Activated T-helper 1 cell treated with anti-CD3 and anti-CD28 coated beads, Interleukin-12 subunit alpha, Interleukin-12 subunit beta, Interleukin-2, Interleukin-4 antibody, amounts not matched to agents 30 ng/mL and 10 ng/mL and 1 ng/mL, durations not matched to agents 14 hours and 24 hours and 36 hours (primary cell): ENCODE measurements at regions of chr5 and their contacts with region 1.

Region 1: DNA sequence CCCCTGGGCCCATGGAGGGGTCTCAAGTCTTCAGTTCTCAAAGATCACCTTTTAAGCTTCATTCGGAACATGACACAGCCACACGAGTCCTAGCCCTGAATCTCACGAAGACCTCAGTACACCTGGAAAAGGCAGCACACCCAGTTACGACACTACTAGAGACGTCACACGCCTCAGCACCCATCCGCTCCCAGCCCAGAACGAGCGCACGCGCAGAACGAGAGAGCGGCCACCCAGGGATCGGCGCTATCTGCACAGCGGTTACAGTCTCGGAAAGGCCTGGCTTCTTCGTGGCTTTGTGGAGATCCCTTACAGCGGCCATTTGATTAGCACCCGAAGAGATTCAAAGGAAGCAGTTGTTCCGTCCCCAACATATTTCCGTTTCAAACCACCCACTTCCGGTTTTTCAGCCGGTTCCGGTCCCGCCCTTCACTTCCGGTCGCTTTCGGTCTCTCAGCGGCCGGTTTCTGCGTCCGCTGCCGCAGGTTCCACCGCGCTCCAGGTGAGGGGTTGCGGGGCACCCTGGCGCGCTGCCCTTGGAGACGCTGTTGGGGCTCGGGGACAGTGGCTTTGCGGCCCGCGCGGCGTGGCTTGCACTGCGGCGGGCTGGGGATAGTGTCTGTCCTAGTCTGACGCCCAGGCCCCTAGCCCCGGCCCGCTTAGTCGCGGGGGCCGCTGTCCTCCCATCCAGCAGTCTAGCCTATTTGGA is at the start of gene UBLCP1:
- DNase-seq: peak; percentile 71
- H3K4me3 Mint-ChIP-seq: peak within 1 kb of the TSS; percentile 96
- H3K27ac Mint-ChIP-seq: peak within 1 kb of the TSS; percentile 98
- H3K4me1 Mint-ChIP-seq: peaks cover 21% of the 10 kb centered on the region
- H3K27me3 Mint-ChIP-seq: peaks cover 2% of the 10 kb centered on the region
- total RNA-seq, gene UBLCP1: 30.8 and 32.3 TPM in 2 replicates

Region 2: DNA sequence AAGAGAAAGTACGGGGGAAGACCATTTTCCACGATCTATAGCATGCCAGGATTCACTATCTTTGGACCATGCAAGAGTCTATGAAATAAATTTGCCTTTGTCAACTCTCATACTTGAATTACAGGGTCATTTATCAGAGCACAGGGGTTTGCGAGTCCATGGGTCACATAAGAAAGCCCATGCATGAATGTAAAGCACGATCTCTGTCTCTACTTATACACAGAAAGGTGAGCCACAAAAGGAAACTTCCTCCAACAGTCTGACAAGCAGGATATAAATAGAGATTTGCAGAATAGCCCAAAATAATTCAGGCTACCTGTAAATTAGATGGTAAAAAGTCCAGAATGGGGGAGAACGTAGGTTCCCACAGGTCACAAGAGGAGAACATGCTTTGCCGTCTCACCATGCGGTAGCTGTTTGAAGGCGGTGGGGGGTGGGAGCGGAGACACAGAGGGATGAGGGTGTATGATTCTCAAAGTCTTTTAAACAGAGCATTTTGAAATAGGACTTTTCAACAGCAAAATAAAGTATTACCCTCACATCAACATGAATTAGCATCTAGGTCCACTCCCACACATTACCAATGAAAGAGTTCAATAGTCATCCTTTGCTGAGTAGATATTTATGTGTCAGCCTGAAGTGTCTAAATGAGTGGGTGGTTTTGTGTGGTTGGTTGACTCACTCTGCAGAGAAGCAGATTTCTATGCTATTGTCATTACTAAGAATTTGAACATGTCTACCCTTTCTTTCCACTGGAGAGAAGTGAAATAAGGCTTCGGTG is 443.0 kb before region 1 on chr5:
- intact Hi-C with region 1: loop called (anchors 2 kb)
- DNase-seq: no peak
- H3K4me3 Mint-ChIP-seq: no peak overlapping the region
- H3K27ac Mint-ChIP-seq: peak overlapping the region; percentile 80
- H3K4me1 Mint-ChIP-seq: peaks cover 55% of the 10 kb centered on the region
- H3K27me3 Mint-ChIP-seq: no peaks in the 10 kb centered on the region

Region 3: DNA sequence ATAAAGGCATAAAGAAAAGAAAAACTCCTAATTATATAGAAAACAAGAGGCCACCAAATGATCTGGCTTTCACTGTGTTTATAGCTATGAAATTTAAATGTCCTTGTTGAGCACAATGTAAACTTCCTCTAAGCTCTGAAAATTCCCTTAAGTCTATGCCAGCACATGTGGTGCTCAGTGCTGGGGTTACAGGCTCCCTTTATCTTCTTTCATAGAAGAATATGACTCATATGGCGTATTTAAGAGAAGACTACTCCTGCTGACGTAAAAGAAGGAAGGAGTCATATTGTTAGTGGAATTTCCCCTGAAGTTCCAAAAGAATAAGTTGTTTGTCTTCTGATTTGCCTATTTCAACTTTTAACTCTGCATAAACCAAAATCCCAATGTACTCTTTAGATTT is 84.0 kb before region 1 on chr5:
- intact Hi-C with region 1: loop called (anchors 1 kb)
- DNase-seq: no peak
- H3K4me3 Mint-ChIP-seq: peak overlapping the region; percentile 66
- H3K27ac Mint-ChIP-seq: peak overlapping the region; percentile 91
- H3K4me1 Mint-ChIP-seq: peaks cover 93% of the 10 kb centered on the region
- H3K27me3 Mint-ChIP-seq: no peaks in the 10 kb centered on the region

Region 4: DNA sequence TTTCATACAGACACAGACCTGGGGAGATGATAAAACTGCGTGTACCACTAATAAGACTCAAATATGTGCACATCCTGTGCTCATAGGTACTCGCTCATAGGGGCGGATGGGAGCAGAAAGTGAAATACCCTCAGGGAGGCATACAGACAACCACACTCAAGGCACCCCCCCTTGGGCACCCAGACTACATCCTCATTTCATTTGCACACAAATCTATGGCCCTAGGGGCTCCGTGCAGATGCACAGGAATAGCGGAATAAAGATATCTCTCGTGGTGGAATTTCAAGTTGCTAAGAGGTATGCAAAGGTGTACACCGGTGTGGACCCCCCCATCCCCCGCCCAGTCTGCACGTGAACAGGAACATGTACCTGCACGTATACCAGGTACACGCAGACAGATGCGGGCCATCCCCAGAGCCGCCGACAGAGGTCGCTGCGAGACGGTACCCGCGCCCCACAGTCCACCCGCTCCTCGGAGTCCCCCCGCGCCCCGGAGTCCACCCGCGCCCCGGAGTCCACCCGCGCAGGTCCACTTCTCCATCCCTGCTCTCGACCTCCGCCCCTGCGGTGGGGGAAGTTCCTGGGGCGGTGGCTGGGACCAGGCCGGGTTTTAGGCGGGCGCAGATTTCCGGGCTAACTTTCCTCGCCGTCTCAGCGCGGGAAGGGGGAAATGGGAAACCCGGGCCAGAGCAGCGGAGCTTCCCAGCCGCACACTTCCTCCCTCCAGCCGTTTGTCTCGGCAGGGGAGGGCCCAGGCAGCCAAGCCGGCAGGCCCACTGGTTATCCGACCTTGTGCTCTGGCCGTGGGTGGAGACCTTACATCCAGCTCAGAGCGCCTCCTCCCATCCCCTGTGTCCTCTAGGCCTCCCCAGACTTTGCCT is 68.3 kb after region 1 on chr5:
- intact Hi-C with region 1: loop called (anchors 1 kb)
- DNase-seq: peak; percentile 53
- H3K4me3 Mint-ChIP-seq: peak overlapping the region; percentile 72
- H3K27ac Mint-ChIP-seq: peak overlapping the region; percentile 58
- H3K4me1 Mint-ChIP-seq: peaks cover 56% of the 10 kb centered on the region
- H3K27me3 Mint-ChIP-seq: peaks cover 25% of the 10 kb centered on the region

Region 5: GRCh38 chr5:160119142-160119904 is 856.3 kb after region 1 on chr5 and contains the start of gene PWWP2A:
- intact Hi-C with region 1: loop called (anchors 1 kb)
- DNase-seq: peak; percentile 96
- H3K4me3 Mint-ChIP-seq: peak within 1 kb of the TSS; percentile 95
- H3K27ac Mint-ChIP-seq: peak within 1 kb of the TSS; percentile 96
- H3K4me1 Mint-ChIP-seq: peaks cover 15% of the 10 kb centered on the region
- H3K27me3 Mint-ChIP-seq: peaks cover 4% of the 10 kb centered on the region
- total RNA-seq, gene PWWP2A: 29.7 and 30.2 TPM in 2 replicates